Breast epithelium (tissue), 4 donors: ENCODE measurements at regions of chr3 and their contacts with region 1.

Region 1: GRCh38 chr3:51391075-51391567 is at the start of gene RBM15B:
- DNase-seq: peak; percentile 98
- H3K4me3 ChIP-seq: peak within 1 kb of the TSS; percentile 65 to 77 (median 76)
- H3K27ac ChIP-seq: peak within 1 kb of the TSS; percentile 88 to 89
- H3K4me1 ChIP-seq: peaks cover 5 to 37% of the 10 kb centered on the region in 2 donors
- H3K27me3 ChIP-seq: no peaks in the 10 kb centered on the region
- CTCF ChIP-seq: peak in 1 of 3 donors; percentile 81
- POLR2A ChIP-seq: no peak
- total RNA-seq, gene RBM15B: 24.6 to 32.5 (median 28.7) TPM

Region 2: GRCh38 chr3:50365080-50365841 is 1025.9 kb before region 1 on chr3:
- intact Hi-C with region 1: no loop called
- DNase-seq: peak; percentile 88 to 90
- H3K4me3 ChIP-seq: peak overlapping the region; percentile 51 to 94 (median 65)
- H3K27ac ChIP-seq: peak overlapping the region; percentile 70 to 78
- H3K4me1 ChIP-seq: no peaks in the 10 kb centered on the region
- H3K27me3 ChIP-seq: no peaks in the 10 kb centered on the region
- CTCF ChIP-seq: no peak
- POLR2A ChIP-seq: no peak

Region 3: DNA sequence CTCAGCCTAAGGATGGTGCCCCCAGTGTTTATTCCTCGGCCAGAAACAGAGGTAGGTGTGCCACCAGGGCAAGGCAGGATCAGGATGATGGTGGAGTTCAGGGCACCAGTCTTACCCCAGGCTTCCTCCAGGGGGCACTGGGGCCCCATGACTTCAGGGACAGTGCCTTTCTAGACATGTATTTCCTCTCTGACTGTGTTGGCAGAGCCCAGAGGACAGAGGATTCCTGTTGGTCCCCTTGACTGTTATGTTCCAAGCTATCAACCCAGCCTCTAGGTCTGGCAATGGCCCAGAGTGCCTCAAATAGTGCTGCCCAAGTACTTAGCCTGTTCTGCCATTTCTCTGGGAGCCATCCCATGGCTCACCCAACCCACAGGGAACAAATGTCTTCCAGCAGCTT is 819.0 kb before region 1 on chr3:
- intact Hi-C with region 1: loop called (anchors 10 kb)
- DNase-seq: peak; percentile 70 to 71
- H3K4me3 ChIP-seq: no peak overlapping the region
- H3K27ac ChIP-seq: peak overlapping the region; percentile 25 to 59
- H3K4me1 ChIP-seq: no peaks in the 10 kb centered on the region
- H3K27me3 ChIP-seq: no peaks in the 10 kb centered on the region
- CTCF ChIP-seq: peak; percentile 87 to 97 (median 95)
- POLR2A ChIP-seq: no peak

Region 4: DNA sequence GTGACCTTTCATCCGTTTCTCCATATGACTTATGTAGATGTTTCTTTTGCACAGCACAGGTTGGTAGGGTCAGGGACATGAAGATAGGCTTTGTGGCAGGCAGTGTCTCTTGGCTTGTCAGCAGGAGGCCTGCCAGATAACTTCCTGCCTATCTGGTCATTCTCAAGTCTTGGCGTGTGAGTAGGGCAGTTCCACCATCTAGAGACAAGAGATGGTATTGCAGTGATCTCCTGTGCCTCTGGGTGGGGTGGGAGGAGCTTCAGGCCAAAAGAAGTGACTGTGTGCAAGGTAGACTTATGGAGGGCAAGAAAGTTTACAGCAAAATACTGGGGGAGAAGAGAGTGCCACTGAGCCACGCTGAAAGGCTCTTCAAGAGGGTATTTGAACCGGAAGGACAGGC is 291.0 kb after region 1 on chr3:
- intact Hi-C with region 1: loop called (anchors 2 kb)
- DNase-seq: peak in 1 of 2 donors; percentile 73
- H3K4me3 ChIP-seq: no peak overlapping the region
- H3K27ac ChIP-seq: peak overlapping the region in 1 of 2 donors; percentile 43
- H3K4me1 ChIP-seq: no peaks in the 10 kb centered on the region
- H3K27me3 ChIP-seq: no peaks in the 10 kb centered on the region
- CTCF ChIP-seq: peak; percentile 78 to 86 (median 81)
- POLR2A ChIP-seq: no peak